ENCODE measurements at regions of chr3 and their contacts with region 1.

Region 1: DNA sequence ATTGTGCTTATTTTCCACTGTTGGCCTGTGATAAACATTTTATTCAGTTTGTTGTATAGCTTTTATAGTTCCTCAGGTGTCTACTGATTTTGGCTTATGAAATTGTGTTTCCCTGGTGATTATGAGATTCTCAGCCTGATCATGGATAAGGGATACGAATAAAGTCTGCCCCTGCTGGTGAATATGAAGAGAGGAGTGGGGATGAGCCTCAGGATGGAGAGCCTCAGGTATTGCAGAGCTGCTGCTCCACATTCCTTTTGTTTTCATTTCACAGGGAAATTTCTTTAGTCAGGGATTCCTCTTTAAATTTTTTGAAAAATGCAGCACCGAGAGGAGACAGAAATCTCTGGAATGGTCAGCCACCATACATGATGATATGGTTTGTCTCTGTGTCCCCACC is 14.7 kb upstream of the RAB6B start:
- DNase-seq: no peak
- ATAC-seq: no peak
- H3K4me3 ChIP-seq: no peak overlapping the region
- H3K4me3 Mint-ChIP-seq: no peak overlapping the region
- H3K27ac ChIP-seq: no peak overlapping the region
- H3K27ac Mint-ChIP-seq: no peak overlapping the region
- H3K4me1 ChIP-seq: no peaks in the 10 kb centered on the region
- H3K4me1 Mint-ChIP-seq: no peaks in the 10 kb centered on the region
- H3K27me3 ChIP-seq: peaks cover 0 to 15% (median 6%) of the 10 kb centered on the region in 4 experiments
- H3K27me3 Mint-ChIP-seq: peaks cover 14% of the 10 kb centered on the region
- CTCF ChIP-seq: no peak

Region 2: GRCh38 chr3:131988209-131988608 is 1922.2 kb before region 1 on chr3:
- CTCF ChIA-PET with region 1: no interaction called
- POLR2A ChIA-PET with region 1: no interaction called
- intact Hi-C with region 1: no loop called
- DNase-seq: no peak
- ATAC-seq: no peak
- H3K4me3 ChIP-seq: no peak overlapping the region
- H3K4me3 Mint-ChIP-seq: no peak overlapping the region
- H3K27ac ChIP-seq: no peak overlapping the region
- H3K27ac Mint-ChIP-seq: no peak overlapping the region
- H3K4me1 ChIP-seq: no peaks in the 10 kb centered on the region
- H3K4me1 Mint-ChIP-seq: no peaks in the 10 kb centered on the region
- H3K27me3 ChIP-seq: no peaks in the 10 kb centered on the region
- H3K27me3 Mint-ChIP-seq: peaks cover 4% of the 10 kb centered on the region
- CTCF ChIP-seq: no peak

Region 3: DNA sequence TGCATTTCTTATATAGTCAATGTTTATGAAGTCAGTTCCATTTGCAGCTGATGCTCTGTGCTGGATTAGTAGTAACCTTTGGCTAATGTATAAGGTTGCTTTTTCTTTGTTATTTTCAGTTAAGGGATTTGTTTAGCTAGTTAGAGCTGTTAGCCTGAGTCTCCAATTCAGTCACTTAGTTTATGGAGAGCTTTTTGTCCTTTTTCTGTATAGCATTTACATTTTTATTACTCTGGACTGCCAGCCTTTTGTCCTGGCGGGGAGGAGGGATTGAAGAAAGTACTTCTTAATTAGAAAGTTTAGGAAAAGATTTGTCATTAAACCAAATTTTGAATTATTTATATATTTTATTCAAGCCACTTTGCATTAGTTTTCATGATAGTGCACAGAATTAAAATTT is 1441.1 kb before region 1 on chr3:
- CTCF ChIA-PET with region 1: no interaction called
- POLR2A ChIA-PET with region 1: no interaction called
- intact Hi-C with region 1: loop called (anchors 5 kb)
- DNase-seq: no peak
- ATAC-seq: no peak
- H3K4me3 ChIP-seq: no peak overlapping the region
- H3K4me3 Mint-ChIP-seq: no peak overlapping the region
- H3K27ac ChIP-seq: no peak overlapping the region
- H3K27ac Mint-ChIP-seq: no peak overlapping the region
- H3K4me1 ChIP-seq: no peaks in the 10 kb centered on the region
- H3K4me1 Mint-ChIP-seq: no peaks in the 10 kb centered on the region
- H3K27me3 ChIP-seq: no peaks in the 10 kb centered on the region
- H3K27me3 Mint-ChIP-seq: no peaks in the 10 kb centered on the region
- CTCF ChIP-seq: no peak

Region 4: GRCh38 chr3:133991637-133992036 is 81.2 kb after region 1 on chr3:
- CTCF ChIA-PET with region 1: no interaction called
- POLR2A ChIA-PET with region 1: no interaction called
- intact Hi-C with region 1: no loop called
- DNase-seq: no peak
- ATAC-seq: no peak
- H3K4me3 ChIP-seq: no peak overlapping the region
- H3K4me3 Mint-ChIP-seq: no peak overlapping the region
- H3K27ac ChIP-seq: no peak overlapping the region
- H3K27ac Mint-ChIP-seq: no peak overlapping the region
- H3K4me1 ChIP-seq: no peaks in the 10 kb centered on the region
- H3K4me1 Mint-ChIP-seq: no peaks in the 10 kb centered on the region
- H3K27me3 ChIP-seq: peaks cover 0 to 5% (median 2%) of the 10 kb centered on the region in 4 experiments
- H3K27me3 Mint-ChIP-seq: peaks cover 16% of the 10 kb centered on the region
- CTCF ChIP-seq: no peak

Region 5: GRCh38 chr3:134299185-134299887 is 388.9 kb after region 1 on chr3:
- CTCF ChIA-PET with region 1: no interaction called
- POLR2A ChIA-PET with region 1: no interaction called
- intact Hi-C with region 1: no loop called
- DNase-seq: no peak
- ATAC-seq: no peak
- H3K4me3 ChIP-seq: no peak overlapping the region
- H3K4me3 Mint-ChIP-seq: no peak overlapping the region
- H3K27ac ChIP-seq: no peak overlapping the region
- H3K27ac Mint-ChIP-seq: no peak overlapping the region
- H3K4me1 ChIP-seq: peaks cover 4 to 5% of the 10 kb centered on the region in 2 donors
- H3K4me1 Mint-ChIP-seq: no peaks in the 10 kb centered on the region
- H3K27me3 ChIP-seq: peaks cover 0 to 4% (median 2%) of the 10 kb centered on the region in 4 experiments
- H3K27me3 Mint-ChIP-seq: peaks cover 20% of the 10 kb centered on the region
- CTCF ChIP-seq: no peak

Measured in B cell (primary cell).